ENCODE measurements at regions of chr15 and their contacts with region 1.

Region 1: DNA sequence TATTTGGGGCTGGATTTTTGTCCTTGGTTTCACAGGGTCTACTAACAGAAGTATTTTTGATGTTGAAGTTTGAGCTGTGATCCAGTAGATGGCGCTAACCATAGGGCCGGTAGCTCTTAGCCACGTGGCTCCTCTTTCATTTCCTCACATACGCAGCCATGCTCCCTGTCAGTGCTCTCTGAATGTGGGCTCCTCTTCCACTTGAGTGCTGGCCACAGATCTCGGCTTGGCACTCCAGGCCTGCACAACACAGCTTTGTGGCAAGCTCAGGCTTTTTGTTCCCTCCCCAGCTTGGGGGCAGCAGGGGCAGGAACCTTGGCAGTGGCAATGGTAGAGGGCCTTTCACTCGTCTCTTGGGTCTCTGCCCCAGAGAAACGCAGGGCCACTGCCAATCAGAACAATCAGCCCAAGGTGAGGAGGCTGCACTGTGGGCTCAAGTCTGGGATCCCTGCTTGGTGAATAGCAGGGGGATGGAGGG is 18.6 kb upstream of the DNAAF4 start:
- DNase-seq: no peak
- H3K4me3 Mint-ChIP-seq: no peak overlapping the region
- H3K27ac Mint-ChIP-seq: no peak overlapping the region
- H3K4me1 Mint-ChIP-seq: peaks cover 17% of the 10 kb centered on the region
- H3K27me3 Mint-ChIP-seq: peaks cover 34% of the 10 kb centered on the region

Region 2: GRCh38 chr15:55297315-55297714 is 229.3 kb before region 1 on chr15:
- CTCF ChIA-PET with region 1: no interaction called
- POLR2A ChIA-PET with region 1: no interaction called
- DNase-seq: no peak
- H3K4me3 Mint-ChIP-seq: no peak overlapping the region
- H3K27ac Mint-ChIP-seq: no peak overlapping the region
- H3K4me1 Mint-ChIP-seq: no peaks in the 10 kb centered on the region
- H3K27me3 Mint-ChIP-seq: no peaks in the 10 kb centered on the region

Region 3: GRCh38 chr15:55514414-55514850 is 12.2 kb before region 1 on chr15:
- CTCF ChIA-PET with region 1: interaction called, 10 read pairs
- POLR2A ChIA-PET with region 1: interaction called, 3 read pairs
- DNase-seq: no peak
- H3K4me3 Mint-ChIP-seq: no peak overlapping the region
- H3K27ac Mint-ChIP-seq: no peak overlapping the region
- H3K4me1 Mint-ChIP-seq: no peaks in the 10 kb centered on the region
- H3K27me3 Mint-ChIP-seq: no peaks in the 10 kb centered on the region

Measured in activated CD4-positive, alpha-beta memory T cell treated with anti-CD3 and anti-CD28 coated beads, Interleukin-2, amount 10 ng/mL, durations not matched to agents 7 days and 5 days (primary cell).